Vagina (tissue), 2 donors: ENCODE measurements at regions of chr22 and their contacts with region 1.

Region 1: GRCh38 chr22:40346178-40347118 is at the start of gene ADSL:
- DNase-seq: no peak
- H3K4me3 ChIP-seq: peak within 1 kb of the TSS; percentile 58 to 68
- H3K27ac ChIP-seq: peak within 1 kb of the TSS; percentile 86
- H3K4me1 ChIP-seq: peaks cover 26% of the 10 kb centered on the region
- H3K27me3 ChIP-seq: no peaks in the 10 kb centered on the region
- CTCF ChIP-seq: no peak
- POLR2A ChIP-seq: peak in 1 of 2 donors; percentile 60
- total RNA-seq, gene ADSL: 41.0 TPM

Region 2: GRCh38 chr22:39532215-39533071 is 814.0 kb before region 1 on chr22 and contains the start of gene RPS19BP1:
- intact Hi-C with region 1: loop called (anchors 10 kb)
- DNase-seq: peak; percentile 99 to 100
- H3K4me3 ChIP-seq: peak within 1 kb of the TSS; percentile 79 to 87
- H3K27ac ChIP-seq: peak within 1 kb of the TSS; percentile 85
- H3K4me1 ChIP-seq: peaks cover 61% of the 10 kb centered on the region
- H3K27me3 ChIP-seq: no peaks in the 10 kb centered on the region
- CTCF ChIP-seq: no peak
- POLR2A ChIP-seq: peak in 1 of 2 donors; percentile 71
- total RNA-seq, gene RPS19BP1: 107 TPM